Heart left ventricle (tissue), 16 donors: ENCODE measurements at regions of chr9 and their contacts with region 1.

Region 1: DNA sequence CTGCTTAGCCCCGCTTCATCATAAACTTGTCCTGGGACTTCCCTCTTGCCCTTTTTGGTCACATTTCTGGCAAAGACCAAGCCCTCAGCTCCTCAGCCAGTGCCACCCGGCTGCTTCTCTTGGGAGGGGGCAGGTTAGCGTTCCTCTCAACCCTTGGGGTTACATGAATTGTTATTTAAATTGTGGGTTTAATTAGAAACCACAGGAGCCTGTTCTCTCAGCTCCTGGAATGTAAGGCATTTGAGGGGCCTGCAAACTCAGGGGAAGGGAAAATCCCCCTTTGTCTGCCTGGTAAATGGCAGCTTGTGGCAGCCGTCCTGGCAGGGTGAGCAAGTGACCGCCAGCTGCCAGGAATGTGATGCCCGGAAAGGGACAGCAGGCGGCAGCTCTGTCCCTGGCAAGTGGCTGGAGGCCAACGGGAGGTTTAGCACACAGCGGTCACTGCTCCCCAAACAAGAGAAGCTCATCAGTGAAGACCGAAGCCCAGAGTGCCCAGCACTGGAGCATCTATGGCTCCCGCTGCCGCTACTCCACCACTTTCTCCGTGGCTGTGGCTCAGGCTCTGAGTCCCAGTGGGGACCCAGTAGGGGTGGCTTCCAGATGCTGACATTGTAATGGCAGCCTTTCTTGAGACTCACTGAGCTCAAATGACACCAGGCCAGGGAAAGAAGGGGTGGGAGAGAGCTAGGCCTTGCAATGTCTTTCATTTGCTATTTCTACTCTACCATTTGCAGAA is 51.7 kb downstream of the SHB start:
- DNase-seq: peak; percentile 74 to 88 (median 79)
- ATAC-seq: peak; percentile 71 to 90 (median 84)
- H3K4me3 ChIP-seq: no peak overlapping the region
- H3K27ac ChIP-seq: peak overlapping the region in 10 of 12 donors; percentile 18 to 87 (median 72)
- H3K4me1 ChIP-seq: peaks cover 11 to 65% (median 48%) of the 10 kb centered on the region in 12 donors
- H3K27me3 ChIP-seq: no peaks in the 10 kb centered on the region
- CTCF ChIP-seq: peak in 11 of 12 donors; percentile 24 to 63 (median 49)
- POLR2A ChIP-seq: no peak

Region 2: GRCh38 chr9:37920471-37921167 is 96.7 kb before region 1 on chr9:
- intact Hi-C with region 1: loop called in 2 of 10 experiments (anchors 10 kb)
- DNase-seq: no peak
- ATAC-seq: no peak
- H3K4me3 ChIP-seq: no peak overlapping the region
- H3K27ac ChIP-seq: no peak overlapping the region
- H3K4me1 ChIP-seq: peaks cover 0 to 52% (median 26%) of the 10 kb centered on the region in 12 donors
- H3K27me3 ChIP-seq: no peaks in the 10 kb centered on the region
- CTCF ChIP-seq: no peak
- POLR2A ChIP-seq: no peak

Region 3: GRCh38 chr9:37963936-37964739 is 53.2 kb before region 1 on chr9:
- intact Hi-C with region 1: loop called in 1 of 10 experiments (anchors 10 kb)
- DNase-seq: peak in 1 of 5 donors; percentile 55
- ATAC-seq: peak in 3 of 4 donors; percentile 40 to 69 (median 54)
- H3K4me3 ChIP-seq: no peak overlapping the region
- H3K27ac ChIP-seq: peak overlapping the region in 2 of 12 donors; percentile 41 to 46
- H3K4me1 ChIP-seq: peaks cover 0 to 41% (median 20%) of the 10 kb centered on the region in 12 donors
- H3K27me3 ChIP-seq: no peaks in the 10 kb centered on the region
- CTCF ChIP-seq: no peak
- POLR2A ChIP-seq: no peak

Region 4: GRCh38 chr9:38039090-38039906 is 22.0 kb after region 1 on chr9:
- intact Hi-C with region 1: loop called in 1 of 10 experiments (anchors 2 kb)
- DNase-seq: peak in 1 of 5 donors; percentile 54
- ATAC-seq: peak in 2 of 4 donors; percentile 8
- H3K4me3 ChIP-seq: no peak overlapping the region
- H3K27ac ChIP-seq: peak overlapping the region; percentile 12 to 77 (median 51)
- H3K4me1 ChIP-seq: peaks cover 4 to 85% (median 64%) of the 10 kb centered on the region in 12 donors
- H3K27me3 ChIP-seq: no peaks in the 10 kb centered on the region
- CTCF ChIP-seq: no peak
- POLR2A ChIP-seq: no peak

Region 5: DNA sequence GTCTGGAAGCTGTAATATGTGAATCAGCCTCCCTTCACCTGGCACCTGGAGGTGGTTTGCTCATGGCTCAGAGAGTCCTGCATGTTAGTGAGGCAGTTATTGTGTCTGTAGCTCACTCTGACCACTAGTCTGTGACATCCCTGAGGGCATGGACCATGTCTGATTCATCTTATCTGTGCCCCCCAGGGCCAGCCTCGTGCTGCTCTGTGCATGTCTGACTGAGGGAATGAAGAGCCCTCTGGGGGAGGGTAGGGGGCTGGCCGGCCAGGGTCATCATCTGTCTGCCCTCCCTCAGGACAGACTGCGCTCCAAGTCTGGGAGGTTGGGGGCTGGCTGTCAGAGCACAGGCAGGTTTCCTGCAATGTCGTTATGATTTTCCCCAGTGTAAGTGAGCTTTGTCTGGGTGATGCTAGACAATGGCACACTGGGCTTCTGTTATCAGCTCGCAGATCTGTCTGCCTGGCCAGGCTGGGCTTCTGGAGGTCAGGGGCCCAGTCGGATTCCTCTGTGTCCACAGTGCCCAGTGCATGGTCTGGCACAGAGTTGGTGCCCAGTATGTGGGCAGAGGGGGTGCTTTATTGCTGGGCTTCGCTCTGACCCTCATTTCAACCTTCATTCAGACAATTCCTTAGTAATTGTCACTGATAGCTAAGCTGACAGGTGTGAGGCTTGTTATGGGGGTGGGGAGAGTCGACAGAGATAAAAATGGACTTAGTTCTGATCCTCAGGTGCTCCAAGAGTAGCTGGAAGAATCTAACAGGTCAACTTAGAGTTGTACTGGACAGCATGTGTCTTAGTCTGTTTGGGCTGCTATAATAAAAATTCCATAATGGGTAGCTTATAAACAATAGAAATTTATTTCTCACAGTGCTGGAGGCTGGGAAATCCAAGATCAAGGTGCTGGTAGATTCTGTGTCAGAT is 137.4 kb after region 1 on chr9:
- intact Hi-C with region 1: loop called in 1 of 10 experiments (anchors 5 kb)
- DNase-seq: no peak
- ATAC-seq: peak in 2 of 4 donors; percentile 13 to 33
- H3K4me3 ChIP-seq: no peak overlapping the region
- H3K27ac ChIP-seq: no peak overlapping the region
- H3K4me1 ChIP-seq: no peaks in the 10 kb centered on the region
- H3K27me3 ChIP-seq: no peaks in the 10 kb centered on the region
- CTCF ChIP-seq: no peak
- POLR2A ChIP-seq: no peak

Region 6: DNA sequence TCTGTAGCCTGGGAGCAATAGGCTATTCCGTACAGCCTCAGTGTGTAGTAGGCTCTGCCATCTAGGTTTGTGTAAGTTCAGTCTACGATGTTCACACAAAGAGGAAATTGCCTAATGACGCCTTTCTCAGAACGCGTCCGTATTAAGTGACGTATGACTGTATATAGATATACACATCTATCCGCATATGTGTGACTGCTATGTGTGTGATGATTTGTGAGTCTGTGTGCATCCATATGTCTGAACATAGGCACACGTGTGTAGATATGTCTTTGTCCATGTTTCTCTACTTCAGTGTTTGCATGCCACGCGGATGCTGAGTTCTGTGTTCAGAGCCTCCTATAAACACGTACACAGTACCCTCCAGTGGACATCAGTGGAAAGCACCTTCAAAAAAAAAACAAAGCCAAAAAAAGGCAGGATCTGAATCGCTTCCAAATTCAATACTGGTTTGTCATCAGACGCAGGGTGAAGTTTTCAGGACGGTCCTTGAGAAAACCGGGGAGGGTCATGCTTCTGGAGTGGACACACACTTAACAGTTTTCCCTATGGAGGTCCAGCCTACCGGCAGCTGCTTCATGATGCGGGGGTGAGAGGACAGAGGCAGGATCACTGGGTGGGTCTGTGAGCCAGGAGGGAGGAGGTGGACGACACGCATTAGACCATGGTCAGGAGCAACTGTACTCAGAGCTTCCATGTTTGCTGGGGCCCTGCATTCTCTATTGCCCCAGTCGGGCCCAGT is 345.7 kb after region 1 on chr9:
- intact Hi-C with region 1: loop called in 1 of 10 experiments (anchors 5 kb)
- DNase-seq: peak in 3 of 5 donors; percentile 20 to 44 (median 26)
- ATAC-seq: peak; percentile 73 to 90 (median 81)
- H3K4me3 ChIP-seq: peak overlapping the region in 1 of 12 donors; percentile 32
- H3K27ac ChIP-seq: no peak overlapping the region
- H3K4me1 ChIP-seq: peaks cover 0 to 9% (median 0%) of the 10 kb centered on the region in 12 donors
- H3K27me3 ChIP-seq: no peaks in the 10 kb centered on the region
- CTCF ChIP-seq: peak; percentile 36 to 72 (median 66)
- POLR2A ChIP-seq: no peak